ENCODE measurements at regions of chr14 and their contacts with region 1.

Region 1: GRCh38 chr14:37874429-37875191 is 279.2 kb downstream of the TTC6 start:
- DNase-seq: peak; percentile 73 to 86
- ATAC-seq: peak; percentile 53 to 90 (median 75)
- H3K4me3 ChIP-seq: no peak overlapping the region
- H3K27ac ChIP-seq: no peak overlapping the region
- H3K4me1 ChIP-seq: no peaks in the 10 kb centered on the region
- H3K27me3 ChIP-seq: peaks cover 0 to 3% (median 0%) of the 10 kb centered on the region in 3 donors
- CTCF ChIP-seq: peak; percentile 80

Region 2: DNA sequence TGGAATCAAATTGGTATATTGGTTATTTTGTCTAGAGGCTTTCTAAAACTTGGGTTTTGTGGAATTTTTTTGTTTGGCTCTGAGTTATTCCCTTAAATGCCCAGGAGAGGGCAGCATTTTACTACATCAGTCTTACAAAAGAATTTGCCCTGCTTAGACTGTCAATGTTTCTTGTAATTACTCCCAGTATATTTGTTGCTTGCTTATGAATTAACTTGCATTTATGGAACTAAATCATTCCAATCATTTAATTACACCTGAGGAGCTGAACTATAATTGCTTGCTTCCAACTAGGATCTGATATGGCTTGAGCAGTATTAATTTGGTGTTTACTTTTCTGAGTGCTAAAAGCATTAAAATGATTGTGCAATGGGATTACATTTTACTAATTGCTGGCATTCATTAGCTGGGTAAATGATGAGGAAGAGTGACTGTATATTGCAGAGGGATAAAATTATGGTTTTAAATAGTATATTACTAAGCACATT is 628.1 kb before region 1 on chr14:
- intact Hi-C with region 1: loop called (anchors 2 to 10 kb)
- DNase-seq: no peak
- ATAC-seq: peak in 1 of 4 donors; percentile 60
- H3K4me3 ChIP-seq: no peak overlapping the region
- H3K27ac ChIP-seq: no peak overlapping the region
- H3K4me1 ChIP-seq: no peaks in the 10 kb centered on the region
- H3K27me3 ChIP-seq: no peaks in the 10 kb centered on the region
- CTCF ChIP-seq: peak; percentile 73

Region 3: DNA sequence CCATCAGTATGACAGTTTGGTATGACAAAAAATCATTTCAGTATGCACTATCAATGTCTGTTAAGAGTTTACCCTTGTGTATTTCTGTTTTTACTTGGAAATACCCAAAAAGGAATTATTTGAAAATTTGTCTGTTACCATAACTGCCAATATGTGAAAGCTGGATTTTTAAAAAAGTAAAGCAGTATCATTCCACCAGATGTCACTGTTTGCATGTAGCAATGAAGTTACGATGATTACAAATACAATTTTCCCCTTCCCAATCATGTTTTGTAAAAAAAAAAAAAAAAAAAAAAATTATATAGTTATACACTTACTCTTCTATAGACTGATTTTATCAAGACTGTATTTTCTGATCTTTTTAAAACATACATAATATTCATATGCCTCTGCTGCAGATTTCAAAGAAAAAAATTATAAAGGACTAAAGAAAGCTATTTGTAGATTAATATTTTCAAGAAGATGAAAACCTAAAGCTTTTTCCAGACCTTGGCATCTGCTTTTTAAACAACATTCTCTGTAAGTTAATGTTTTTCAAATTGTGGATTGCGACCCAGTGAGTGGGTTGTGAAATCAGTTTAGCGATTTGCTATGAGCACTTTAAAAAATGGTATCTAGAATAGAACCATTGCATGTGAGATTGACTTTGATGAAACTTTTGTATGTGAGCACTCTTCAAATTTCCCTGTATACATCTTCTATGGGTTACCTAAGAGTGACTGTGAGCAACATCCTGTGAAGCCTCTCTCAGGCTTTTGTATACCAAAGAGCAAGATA is 165.0 kb before region 1 on chr14:
- intact Hi-C with region 1: loop called in 1 of 2 experiments (anchors 5 kb)
- DNase-seq: no peak
- ATAC-seq: no peak
- H3K4me3 ChIP-seq: no peak overlapping the region
- H3K27ac ChIP-seq: no peak overlapping the region
- H3K4me1 ChIP-seq: no peaks in the 10 kb centered on the region
- H3K27me3 ChIP-seq: no peaks in the 10 kb centered on the region
- CTCF ChIP-seq: peak; percentile 14

Region 4: GRCh38 chr14:38042345-38042744 is 167.7 kb after region 1 on chr14:
- intact Hi-C with region 1: no loop called
- DNase-seq: no peak
- ATAC-seq: no peak
- H3K4me3 ChIP-seq: no peak overlapping the region
- H3K27ac ChIP-seq: no peak overlapping the region
- H3K4me1 ChIP-seq: no peaks in the 10 kb centered on the region
- H3K27me3 ChIP-seq: no peaks in the 10 kb centered on the region
- CTCF ChIP-seq: no peak